ENCODE measurements at regions of chr11 and their contacts with region 1.

Region 1: GRCh38 chr11:8006349-8006977 is 19.3 kb downstream of the EIF3F start:
- DNase-seq: peak; percentile 71
- ATAC-seq: peak; percentile 98
- H3K4me3 ChIP-seq: no peak overlapping the region
- H3K27ac ChIP-seq: no peak overlapping the region
- H3K4me1 ChIP-seq: peaks cover under 1% of the 10 kb centered on the region; the same call in 1 of the 2 replicates
- H3K27me3 ChIP-seq: no peaks in the 10 kb centered on the region
- CTCF ChIP-seq: peak; percentile 98
- POLR2A ChIP-seq: peak; percentile 61
- RAD21 ChIP-seq: peak; percentile 100

Region 2: DNA sequence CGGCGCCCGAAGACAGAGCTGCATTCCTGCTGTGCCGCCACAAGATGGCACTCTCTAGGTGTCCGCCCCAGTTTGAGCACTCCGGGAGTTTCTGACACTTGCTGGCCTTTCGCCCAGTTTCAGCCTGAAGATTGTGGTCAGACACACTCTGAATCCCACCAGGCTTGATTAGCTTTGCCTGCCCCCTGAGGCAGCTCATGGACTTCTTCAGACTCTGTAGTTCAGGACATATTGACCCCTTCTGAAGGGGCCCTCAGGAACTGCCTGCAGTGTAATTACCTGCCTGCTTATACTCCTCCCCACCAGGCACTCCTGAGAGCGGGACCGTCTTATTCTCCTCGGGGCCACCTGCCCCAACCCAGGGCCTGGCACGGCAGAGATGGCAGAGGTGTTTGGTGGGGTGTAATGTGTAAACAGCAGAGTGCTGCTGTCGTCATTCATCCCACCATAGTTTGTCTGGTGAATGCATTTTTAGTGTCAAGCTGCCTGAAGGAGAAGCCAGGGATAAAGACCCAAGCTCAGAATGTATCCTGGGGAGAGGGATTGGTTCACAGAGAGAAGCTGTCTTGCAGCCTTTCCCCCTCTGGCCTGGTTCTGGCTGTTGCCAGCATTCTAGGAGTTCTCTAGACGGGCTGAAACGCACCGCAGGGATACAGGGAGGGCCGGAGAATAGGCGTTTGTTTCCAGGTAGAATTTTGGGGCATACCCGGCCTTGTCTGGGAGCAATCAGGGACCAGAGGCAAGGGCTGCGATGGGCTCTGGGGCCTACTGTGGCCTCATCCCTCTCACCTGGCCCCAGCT is 27.0 kb after region 1 on chr11:
- CTCF ChIA-PET with region 1: interaction called, 10 read pairs
- POLR2A ChIA-PET with region 1: no interaction called
- dilution Hi-C with region 1: no loop called
- in situ Hi-C with region 1: no loop called
- intact Hi-C with region 1: loop called (anchors 1 kb)
- DNase-seq: peak; percentile 84
- ATAC-seq: peak; percentile 98
- H3K4me3 ChIP-seq: no peak overlapping the region
- H3K27ac ChIP-seq: no peak overlapping the region
- H3K4me1 ChIP-seq: 0 out of 2 replicates have a peak, but pooled peaks cover 1% of the 10 kb centered on the region
- H3K27me3 ChIP-seq: peaks cover 4% of the 10 kb centered on the region; the same call in 1 of the 2 replicates
- CTCF ChIP-seq: peak; percentile 95
- POLR2A ChIP-seq: no peak
- RAD21 ChIP-seq: peak; percentile 91

Region 3: DNA sequence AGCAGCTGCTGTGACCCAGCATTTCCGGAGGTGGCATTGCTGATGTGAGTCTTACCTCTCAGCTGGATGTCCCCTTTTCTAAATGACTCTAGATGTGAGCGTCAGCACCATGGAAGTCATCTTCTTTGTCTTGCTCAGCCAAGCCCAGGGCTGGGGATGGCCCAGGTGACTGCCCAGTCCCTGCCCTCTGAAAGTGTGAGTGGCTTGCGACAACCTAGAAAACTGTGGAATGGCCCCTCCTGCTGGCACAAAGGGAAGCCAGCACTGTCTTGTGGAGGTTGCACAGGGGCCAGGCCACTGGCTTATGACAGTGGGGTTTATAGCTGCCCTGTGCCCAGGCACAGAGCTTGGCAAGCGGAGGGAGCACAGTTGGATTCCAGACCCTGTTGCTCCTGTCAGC is 80.7 kb after region 1 on chr11:
- CTCF ChIA-PET with region 1: interaction called, 30 read pairs
- POLR2A ChIA-PET with region 1: no interaction called
- dilution Hi-C with region 1: no loop called
- in situ Hi-C with region 1: no loop called
- intact Hi-C with region 1: loop called (anchors 1 kb)
- DNase-seq: no peak
- ATAC-seq: peak; percentile 24; the same call in 1 of the 2 replicates
- H3K4me3 ChIP-seq: no peak overlapping the region
- H3K27ac ChIP-seq: no peak overlapping the region
- H3K4me1 ChIP-seq: peaks cover 3% of the 10 kb centered on the region; the same call in 1 of the 2 replicates
- H3K27me3 ChIP-seq: no peaks in the 10 kb centered on the region
- CTCF ChIP-seq: peak; percentile 25; the same call in 1 of the 2 replicates
- POLR2A ChIP-seq: no peak
- RAD21 ChIP-seq: no peak

Region 4: DNA sequence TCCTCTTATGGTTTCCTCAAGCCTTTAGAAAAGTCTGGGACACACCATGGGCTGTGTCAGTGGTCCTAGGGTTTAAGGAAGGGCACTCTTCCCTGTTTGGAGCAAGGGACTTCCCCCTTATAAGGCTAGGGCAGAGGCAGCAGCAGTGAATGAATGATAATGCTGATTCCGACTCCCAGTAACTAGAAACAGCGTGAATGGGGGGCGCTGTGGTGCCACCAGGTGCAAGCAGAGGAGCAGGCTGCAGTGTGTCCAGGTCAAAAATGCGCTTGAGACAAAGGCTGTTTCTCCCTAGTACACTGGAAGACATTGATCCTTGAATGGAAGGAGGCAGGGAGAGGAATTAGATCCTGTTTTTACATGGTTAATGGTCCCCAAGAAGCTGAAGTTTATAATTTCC is 174.0 kb after region 1 on chr11:
- CTCF ChIA-PET with region 1: no interaction called
- POLR2A ChIA-PET with region 1: no interaction called
- dilution Hi-C with region 1: no loop called
- in situ Hi-C with region 1: no loop called
- intact Hi-C with region 1: no loop called
- DNase-seq: no peak
- ATAC-seq: no peak
- H3K4me3 ChIP-seq: no peak overlapping the region
- H3K27ac ChIP-seq: no peak overlapping the region
- H3K4me1 ChIP-seq: no peaks in the 10 kb centered on the region
- H3K27me3 ChIP-seq: peaks cover 8% of the 10 kb centered on the region
- CTCF ChIP-seq: no peak
- POLR2A ChIP-seq: no peak
- RAD21 ChIP-seq: no peak

Region 5: DNA sequence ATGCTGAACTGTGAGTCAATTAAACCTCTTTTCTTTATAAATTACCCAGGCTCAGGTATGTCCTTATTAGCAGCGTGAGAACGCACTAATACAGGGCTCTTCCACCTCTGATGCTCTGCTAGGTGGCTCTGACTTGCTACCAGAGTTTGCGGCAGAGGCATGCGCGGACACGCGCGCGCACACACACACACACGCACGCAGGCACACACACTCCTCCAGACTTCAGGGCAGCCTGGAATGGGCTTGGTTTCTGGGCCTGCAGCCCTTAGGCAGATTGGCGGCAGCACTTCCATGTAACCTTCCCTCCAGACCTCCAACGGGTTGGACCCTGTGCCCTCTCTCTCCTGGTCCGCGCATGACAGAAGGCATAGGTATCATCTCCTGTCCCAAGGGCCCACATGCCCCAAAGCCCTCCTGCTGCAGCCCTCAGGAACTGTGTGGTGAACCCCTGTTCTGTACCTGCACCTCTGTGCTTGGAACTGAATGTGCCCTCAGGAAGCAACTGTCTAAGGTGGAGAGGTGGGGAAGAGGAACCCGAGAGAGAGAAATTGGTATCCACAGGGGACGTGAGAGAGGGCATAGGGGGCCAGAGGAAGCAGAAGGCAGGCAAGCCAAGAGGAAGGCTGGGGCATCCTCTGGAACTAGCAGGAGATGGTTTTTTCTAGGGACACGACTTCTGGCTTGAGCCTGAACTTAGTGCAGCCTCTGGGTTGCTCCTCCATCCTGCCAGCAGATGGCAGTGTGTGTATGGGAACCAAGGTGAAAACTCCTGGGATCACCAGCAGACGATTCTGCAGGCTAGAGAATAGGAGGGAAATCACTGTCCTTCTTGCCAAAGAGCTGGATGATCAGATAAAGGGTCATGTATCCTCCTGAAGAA is 185.8 kb after region 1 on chr11:
- CTCF ChIA-PET with region 1: no interaction called
- POLR2A ChIA-PET with region 1: no interaction called
- dilution Hi-C with region 1: no loop called
- in situ Hi-C with region 1: no loop called
- intact Hi-C with region 1: loop called (anchors 1 kb)
- DNase-seq: peak; percentile 63
- ATAC-seq: peak; percentile 98
- H3K4me3 ChIP-seq: no peak overlapping the region
- H3K27ac ChIP-seq: no peak overlapping the region
- H3K4me1 ChIP-seq: no peaks in the 10 kb centered on the region
- H3K27me3 ChIP-seq: peaks cover 13% of the 10 kb centered on the region
- CTCF ChIP-seq: peak; percentile 82
- POLR2A ChIP-seq: no peak
- RAD21 ChIP-seq: peak; percentile 73

Region 6: DNA sequence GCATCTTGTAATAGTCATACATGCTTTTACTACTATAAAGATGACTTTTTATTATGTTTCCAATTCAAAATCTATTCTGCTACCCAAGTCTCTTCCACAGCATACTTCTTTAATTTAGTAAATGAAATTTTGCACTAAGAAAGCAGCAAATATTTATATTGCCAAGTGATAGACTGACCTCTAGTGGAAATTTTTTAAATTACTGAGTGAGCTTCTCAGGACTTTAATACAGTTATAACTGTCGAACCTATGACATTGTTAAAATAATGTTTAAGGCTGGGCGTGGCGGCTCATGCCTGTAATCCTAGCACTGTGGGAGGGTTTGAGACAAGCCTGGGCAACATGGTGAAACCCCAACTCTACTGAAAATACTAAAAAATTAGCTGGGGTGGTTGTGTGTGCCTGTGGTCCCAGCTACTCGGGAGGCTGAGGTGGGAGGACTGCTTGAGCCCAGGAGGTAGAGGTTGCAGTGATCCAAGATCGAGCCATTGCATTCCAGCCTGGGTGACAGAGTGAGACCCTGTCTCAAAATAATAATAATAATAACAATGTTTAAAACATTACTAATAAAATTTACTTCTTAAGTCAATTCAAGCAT is 560.2 kb after region 1 on chr11:
- CTCF ChIA-PET with region 1: no interaction called
- POLR2A ChIA-PET with region 1: no interaction called
- dilution Hi-C with region 1: no loop called
- in situ Hi-C with region 1: no loop called
- intact Hi-C with region 1: loop called (anchors 1 kb)
- DNase-seq: peak; percentile 48
- ATAC-seq: peak; percentile 79
- H3K4me3 ChIP-seq: no peak overlapping the region
- H3K27ac ChIP-seq: no peak overlapping the region
- H3K4me1 ChIP-seq: no peaks in the 10 kb centered on the region
- H3K27me3 ChIP-seq: peaks cover 5% of the 10 kb centered on the region
- CTCF ChIP-seq: peak; percentile 74
- POLR2A ChIP-seq: no peak
- RAD21 ChIP-seq: peak; percentile 79

Measured in IMR-90 (cell line).